Upper lobe of right lung (tissue), 1 donor: ENCODE measurements at regions of chr12 and their contacts with region 1.

Region 1: GRCh38 chr12:121773011-121773777 is 20.3 kb downstream of the RHOF start:
- DNase-seq: peak; percentile 89
- ATAC-seq: peak; percentile 88
- H3K4me3 ChIP-seq: no peak overlapping the region
- H3K27ac ChIP-seq: peak overlapping the region; percentile 51
- H3K4me1 ChIP-seq: no peaks in the 10 kb centered on the region
- H3K27me3 ChIP-seq: no peaks in the 10 kb centered on the region
- CTCF ChIP-seq: peak; percentile 75

Region 2: GRCh38 chr12:121709478-121709961 is 63.7 kb before region 1 on chr12:
- intact Hi-C with region 1: loop called (anchors 10 kb)
- DNase-seq: no peak
- ATAC-seq: no peak
- H3K4me3 ChIP-seq: no peak overlapping the region
- H3K27ac ChIP-seq: no peak overlapping the region
- H3K4me1 ChIP-seq: peaks cover 21% of the 10 kb centered on the region
- H3K27me3 ChIP-seq: no peaks in the 10 kb centered on the region
- CTCF ChIP-seq: no peak

Region 3: GRCh38 chr12:121741743-121742142 is 31.5 kb before region 1 on chr12:
- intact Hi-C with region 1: no loop called
- DNase-seq: no peak
- ATAC-seq: no peak
- H3K4me3 ChIP-seq: no peak overlapping the region
- H3K27ac ChIP-seq: no peak overlapping the region
- H3K4me1 ChIP-seq: no peaks in the 10 kb centered on the region
- H3K27me3 ChIP-seq: no peaks in the 10 kb centered on the region
- CTCF ChIP-seq: no peak

Region 4: GRCh38 chr12:122282066-122282465 is 508.9 kb after region 1 on chr12:
- intact Hi-C with region 1: no loop called
- DNase-seq: no peak
- ATAC-seq: no peak
- H3K4me3 ChIP-seq: no peak overlapping the region
- H3K27ac ChIP-seq: no peak overlapping the region
- H3K4me1 ChIP-seq: no peaks in the 10 kb centered on the region
- H3K27me3 ChIP-seq: no peaks in the 10 kb centered on the region
- CTCF ChIP-seq: no peak